Sigmoid colon (tissue), 7 donors: ENCODE measurements at regions of chr13 and their contacts with region 1.

Region 1: GRCh38 chr13:29923554-29924481 is 73.4 kb upstream of the UBL3 start:
- DNase-seq: peak; percentile 90
- H3K4me3 ChIP-seq: no peak overlapping the region
- H3K27ac ChIP-seq: peak overlapping the region; percentile 75 to 88 (median 82)
- H3K4me1 ChIP-seq: peaks cover 0 to 40% (median 34%) of the 10 kb centered on the region in 4 donors
- H3K27me3 ChIP-seq: no peaks in the 10 kb centered on the region
- CTCF ChIP-seq: peak; percentile 46 to 70 (median 62)
- EP300 ChIP-seq: no peak
- POLR2A ChIP-seq: no peak

Region 2: DNA sequence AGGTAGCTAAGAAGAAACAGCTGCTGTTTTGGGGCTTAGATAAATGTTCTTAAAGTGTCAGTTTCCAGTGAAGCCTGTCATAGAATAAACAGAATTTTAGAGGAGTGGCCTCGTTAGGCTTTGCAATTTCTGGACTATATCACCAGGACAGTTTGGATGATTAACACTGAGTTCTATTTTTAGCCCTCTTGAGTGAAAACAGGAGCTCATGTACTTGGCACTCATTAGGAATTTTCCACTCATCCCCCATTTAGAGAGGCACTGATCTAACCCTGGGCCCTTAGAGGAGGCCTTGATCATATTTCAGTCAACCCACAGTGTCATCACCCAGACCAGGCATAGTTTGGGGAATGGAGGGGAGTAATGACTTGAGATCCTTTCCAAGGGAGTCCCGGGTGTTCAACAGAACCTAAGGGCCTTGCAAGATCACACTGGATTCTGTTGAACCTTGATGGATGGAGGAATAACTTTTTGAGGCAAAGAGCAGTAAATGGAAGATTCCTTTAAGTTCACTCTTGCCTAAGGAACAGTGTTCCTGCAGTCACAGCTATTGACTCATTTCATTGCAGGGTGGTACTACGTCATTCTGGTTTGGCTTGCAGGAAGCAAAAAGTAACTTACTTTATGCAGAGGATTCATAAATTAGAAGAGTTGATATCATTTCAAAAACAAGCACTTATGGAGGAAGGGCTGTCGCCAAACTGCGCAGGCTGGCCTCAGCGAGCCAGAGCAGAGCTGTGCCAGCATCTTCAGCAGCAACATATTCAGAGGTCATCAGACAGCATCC is 488.5 kb before region 1 on chr13:
- intact Hi-C with region 1: loop called (anchors 10 kb)
- DNase-seq: peak; percentile 88
- H3K4me3 ChIP-seq: no peak overlapping the region
- H3K27ac ChIP-seq: peak overlapping the region; percentile 73 to 88 (median 82)
- H3K4me1 ChIP-seq: peaks cover 0 to 55% (median 47%) of the 10 kb centered on the region in 4 donors
- H3K27me3 ChIP-seq: no peaks in the 10 kb centered on the region
- CTCF ChIP-seq: no peak
- EP300 ChIP-seq: peak; percentile 94 to 97 (median 96)
- POLR2A ChIP-seq: no peak

Region 3: DNA sequence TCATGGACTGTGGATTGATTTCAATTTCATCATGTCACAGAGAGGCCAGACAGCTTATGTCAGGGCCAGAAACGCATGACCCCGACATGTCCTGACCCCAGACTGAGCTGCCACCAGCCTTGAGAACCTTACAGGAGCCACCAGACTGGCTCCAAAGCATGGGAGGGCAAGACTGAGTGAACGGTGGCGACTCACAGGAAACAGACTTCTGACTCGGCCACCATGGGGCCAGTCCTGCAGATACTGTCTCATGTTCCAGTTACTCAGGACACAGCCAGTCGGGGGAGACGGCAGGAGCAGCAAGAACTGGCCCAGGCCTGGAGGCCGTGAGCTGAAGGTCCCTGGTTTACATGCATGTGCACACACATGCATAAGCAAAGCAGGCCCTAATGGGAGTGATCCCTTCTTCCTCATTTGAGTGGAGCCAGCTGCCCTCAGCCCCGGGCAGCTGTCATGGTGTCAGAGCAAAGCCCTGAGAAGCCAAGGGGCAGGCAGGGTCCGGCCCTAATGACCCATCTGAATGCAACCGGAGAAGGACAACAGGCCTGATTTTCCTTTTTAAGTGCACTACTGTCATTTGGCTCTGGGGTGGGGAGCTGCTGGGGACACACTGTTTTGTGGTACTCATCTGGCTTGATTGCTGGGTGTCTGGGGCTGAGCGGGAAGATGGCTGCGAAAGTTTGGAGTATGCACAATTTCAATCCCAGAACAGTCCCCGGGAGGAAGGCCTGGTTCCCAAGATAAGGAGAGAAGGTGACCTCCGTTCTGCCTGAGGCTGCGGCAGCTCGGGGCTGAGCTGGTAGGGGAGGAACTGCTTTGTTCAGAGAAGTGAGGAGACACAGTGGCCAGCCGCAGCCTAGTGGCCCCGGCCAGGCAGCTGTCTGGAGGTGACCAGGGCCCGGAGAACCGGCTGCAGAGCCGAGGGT is 410.2 kb before region 1 on chr13:
- intact Hi-C with region 1: loop called (anchors 5 kb)
- DNase-seq: no peak
- H3K4me3 ChIP-seq: no peak overlapping the region
- H3K27ac ChIP-seq: no peak overlapping the region
- H3K4me1 ChIP-seq: peaks cover 0 to 19% (median 15%) of the 10 kb centered on the region in 4 donors
- H3K27me3 ChIP-seq: no peaks in the 10 kb centered on the region
- CTCF ChIP-seq: no peak
- EP300 ChIP-seq: no peak
- POLR2A ChIP-seq: no peak

Region 4: GRCh38 chr13:29595380-29596063 is 328.3 kb before region 1 on chr13 and contains the start of gene SLC7A1:
- intact Hi-C with region 1: loop called (anchors 5 kb)
- DNase-seq: peak; percentile 90
- H3K4me3 ChIP-seq: peak within 1 kb of the TSS; percentile 66 to 99 (median 75)
- H3K27ac ChIP-seq: peak within 1 kb of the TSS; percentile 90 to 96 (median 93)
- H3K4me1 ChIP-seq: peaks cover 0 to 41% (median 12%) of the 10 kb centered on the region in 4 donors
- H3K27me3 ChIP-seq: no peaks in the 10 kb centered on the region
- CTCF ChIP-seq: no peak
- EP300 ChIP-seq: no peak
- POLR2A ChIP-seq: no peak
- total RNA-seq, gene SLC7A1: 11.8 to 21.3 (median 15.9) TPM

Region 5: DNA sequence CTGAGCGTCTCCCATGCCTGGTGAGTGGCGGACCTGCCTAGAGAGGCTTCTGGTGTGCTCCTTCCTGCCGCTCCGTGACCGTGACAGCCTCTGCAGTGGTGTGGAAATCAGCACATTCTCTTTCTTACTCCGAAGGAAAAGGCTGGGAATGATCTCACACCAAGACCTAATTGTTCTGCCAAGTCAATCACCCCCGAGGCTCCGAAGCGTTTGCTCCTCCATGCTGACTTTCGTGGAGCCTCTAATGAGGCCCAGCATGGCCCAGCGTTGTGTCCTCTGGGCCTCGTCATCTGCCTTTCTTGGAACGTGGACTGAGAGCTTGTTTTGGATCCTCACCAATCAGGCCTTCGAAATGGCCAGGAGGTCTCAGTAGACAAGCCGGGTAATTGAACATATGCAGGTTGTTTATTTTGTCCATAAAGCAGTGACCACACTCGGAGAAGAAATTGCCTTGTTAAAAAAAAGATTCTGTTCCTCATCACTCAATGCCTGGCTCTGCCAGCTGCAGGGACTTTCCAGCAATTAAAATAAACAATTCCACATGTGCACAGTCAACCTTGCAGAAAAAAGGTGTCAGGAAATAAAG is 180.5 kb before region 1 on chr13:
- intact Hi-C with region 1: loop called (anchors 10 kb)
- DNase-seq: peak; percentile 96
- H3K4me3 ChIP-seq: peak overlapping the region in 1 of 4 donors; percentile 15
- H3K27ac ChIP-seq: peak overlapping the region; percentile 52 to 86 (median 82)
- H3K4me1 ChIP-seq: peaks cover 0 to 30% (median 24%) of the 10 kb centered on the region in 4 donors
- H3K27me3 ChIP-seq: no peaks in the 10 kb centered on the region
- CTCF ChIP-seq: no peak
- EP300 ChIP-seq: peak; percentile 48 to 80 (median 72)
- POLR2A ChIP-seq: no peak

Region 6: DNA sequence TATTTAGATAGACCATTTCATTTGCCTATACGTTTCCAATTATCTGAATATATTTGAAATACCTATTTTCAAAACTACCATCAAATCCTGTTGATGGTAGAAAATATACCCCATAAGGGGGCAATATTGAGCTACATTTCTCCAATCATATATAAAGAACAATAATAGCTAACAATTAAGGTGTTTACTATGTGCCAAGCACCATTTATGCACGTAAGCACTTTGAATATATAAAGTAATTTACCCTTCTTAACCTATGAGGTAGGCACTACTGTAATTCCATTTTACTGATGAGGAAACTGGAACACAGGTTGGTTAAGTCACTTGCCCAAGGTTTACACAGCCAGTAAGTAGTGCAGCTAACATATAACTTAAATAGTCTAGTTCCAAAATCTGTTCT is 152.6 kb before region 1 on chr13:
- intact Hi-C with region 1: loop called (anchors 10 kb)
- DNase-seq: no peak
- H3K4me3 ChIP-seq: no peak overlapping the region
- H3K27ac ChIP-seq: no peak overlapping the region
- H3K4me1 ChIP-seq: no peaks in the 10 kb centered on the region
- H3K27me3 ChIP-seq: no peaks in the 10 kb centered on the region
- CTCF ChIP-seq: peak in 2 of 4 experiments; percentile 24 to 47
- EP300 ChIP-seq: no peak
- POLR2A ChIP-seq: no peak

Region 7: DNA sequence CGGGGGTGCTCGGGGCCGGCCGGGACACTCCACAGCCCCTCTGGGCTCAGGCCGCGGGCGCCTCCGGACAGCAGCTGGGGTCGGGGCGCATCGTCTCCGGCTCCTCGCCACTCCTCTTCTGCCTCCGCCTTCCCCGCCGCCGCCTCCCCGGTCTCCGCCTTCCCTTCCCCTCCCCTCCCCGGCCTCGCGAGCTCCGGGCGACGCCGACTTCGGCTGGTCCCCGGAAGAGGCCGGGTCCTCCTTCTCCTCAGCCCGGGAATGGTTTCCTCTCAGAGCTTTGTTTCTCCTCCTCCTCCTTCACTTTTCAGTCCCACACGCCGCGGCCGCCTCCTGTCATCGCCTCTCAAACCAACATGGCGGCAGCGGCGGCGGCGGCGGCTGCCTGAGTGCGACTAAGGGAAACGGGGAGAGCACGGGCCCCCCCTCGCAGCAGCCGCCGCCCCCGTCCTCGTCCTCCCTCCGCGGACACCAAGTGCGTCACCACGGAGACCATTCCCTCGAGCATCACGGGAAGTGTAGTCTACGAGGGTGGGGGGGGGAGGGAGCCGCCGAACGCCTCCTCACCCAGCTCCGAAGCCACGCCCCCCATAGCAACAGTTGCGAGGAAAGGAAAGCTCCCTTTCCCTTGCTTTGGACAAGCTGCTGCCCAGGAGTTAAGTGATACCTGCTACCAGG is 73.5 kb before region 1 on chr13 and contains the start of gene UBL3:
- intact Hi-C with region 1: loop called (anchors 1 kb)
- DNase-seq: peak; percentile 99
- H3K4me3 ChIP-seq: peak within 1 kb of the TSS; percentile 84 to 92 (median 88)
- H3K27ac ChIP-seq: peak within 1 kb of the TSS; percentile 97 to 99 (median 98)
- H3K4me1 ChIP-seq: peaks cover 0 to 22% (median 17%) of the 10 kb centered on the region in 4 donors
- H3K27me3 ChIP-seq: no peaks in the 10 kb centered on the region
- CTCF ChIP-seq: no peak
- EP300 ChIP-seq: peak in 1 of 4 donors; percentile 36
- POLR2A ChIP-seq: peak; percentile 71 to 80
- total RNA-seq, gene UBL3: 35.6 to 44.6 (median 40.6) TPM